ENCODE measurements at regions of chr10 and their contacts with region 1.

Region 1: DNA sequence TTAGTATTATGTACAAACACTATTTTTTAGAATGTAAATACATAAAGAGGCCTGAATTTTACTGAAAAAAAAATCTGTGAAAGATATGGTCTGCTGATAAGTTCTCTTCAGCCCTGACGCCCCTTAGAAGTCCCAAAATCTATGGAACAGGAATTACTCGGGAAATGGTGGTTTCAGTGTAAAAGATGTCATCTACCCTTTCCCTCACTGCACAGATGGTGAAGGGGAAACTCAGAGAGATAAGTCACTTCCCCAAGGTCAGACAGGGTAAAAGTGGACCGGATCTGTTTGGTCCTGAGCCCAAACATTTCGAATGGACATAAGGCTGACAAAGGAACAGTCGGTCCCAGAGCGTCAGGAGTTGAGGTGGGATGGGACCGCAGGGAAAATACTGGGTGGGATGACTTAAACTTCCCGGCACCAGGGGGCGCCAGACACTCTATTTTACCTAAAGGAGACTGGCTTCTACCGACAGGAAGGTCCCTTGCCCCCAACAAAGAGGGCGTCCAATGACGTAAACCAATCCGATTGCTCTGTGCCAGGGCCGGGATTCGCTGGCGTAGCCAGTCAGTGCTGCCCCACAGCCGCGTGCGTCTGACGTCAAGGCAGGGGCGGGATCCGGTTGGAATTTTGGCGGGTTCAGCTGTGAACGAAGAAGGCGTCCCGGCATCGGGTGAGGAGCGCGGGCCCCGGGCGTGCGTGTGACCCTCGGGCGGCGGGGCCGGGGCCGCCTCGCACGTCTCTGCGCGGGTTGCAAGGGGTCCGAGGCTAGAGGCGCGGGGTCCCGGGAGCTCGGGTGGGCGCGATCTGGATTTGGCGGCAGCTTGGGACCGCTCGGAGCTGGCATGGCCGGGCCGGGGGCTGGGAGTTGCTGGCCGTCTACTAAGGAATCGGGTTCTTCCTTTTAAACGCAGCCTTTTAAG is at the start of gene MCM10:
- DNase-seq: peak; percentile 99
- H3K4me3 ChIP-seq: peak within 1 kb of the TSS in 1 of 3 donors; percentile 23
- H3K27ac ChIP-seq: no peak within 1 kb of the TSS
- H3K4me1 ChIP-seq: peaks cover 5 to 12% of the 10 kb centered on the region in 2 donors
- H3K27me3 ChIP-seq: no peaks in the 10 kb centered on the region
- CTCF ChIP-seq: peak; percentile 78 to 94 (median 82)
- POLR2A ChIP-seq: no peak
- total RNA-seq, gene MCM10: 0.24 to 1.4 (median 0.49) TPM

Region 2: GRCh38 chr10:13299437-13300287 is 138.5 kb after region 1 on chr10 and contains the start of gene PHYH:
- intact Hi-C with region 1: loop called (anchors 2 kb)
- DNase-seq: peak; percentile 96 to 97
- H3K4me3 ChIP-seq: peak within 1 kb of the TSS; percentile 73 to 99 (median 74)
- H3K27ac ChIP-seq: peak within 1 kb of the TSS; percentile 99 to 100 (median 100)
- H3K4me1 ChIP-seq: peaks cover 0 to 18% of the 10 kb centered on the region in 2 donors
- H3K27me3 ChIP-seq: no peaks in the 10 kb centered on the region
- CTCF ChIP-seq: peak in 1 of 6 experiments; percentile 2
- POLR2A ChIP-seq: peak; percentile 61 to 98
- total RNA-seq, gene PHYH: 48.5 to 86.8 (median 71.4) TPM

Measured in thyroid gland (tissue), 4 donors.